GM18951 (cell line): ENCODE measurements at regions of chr18 and their contacts with region 1.

Region 1: GRCh38 chr18:3665780-3666525 is 216.0 kb downstream of the TGIF1 start:
- POLR2A ChIP-seq: no peak

Region 2: DNA sequence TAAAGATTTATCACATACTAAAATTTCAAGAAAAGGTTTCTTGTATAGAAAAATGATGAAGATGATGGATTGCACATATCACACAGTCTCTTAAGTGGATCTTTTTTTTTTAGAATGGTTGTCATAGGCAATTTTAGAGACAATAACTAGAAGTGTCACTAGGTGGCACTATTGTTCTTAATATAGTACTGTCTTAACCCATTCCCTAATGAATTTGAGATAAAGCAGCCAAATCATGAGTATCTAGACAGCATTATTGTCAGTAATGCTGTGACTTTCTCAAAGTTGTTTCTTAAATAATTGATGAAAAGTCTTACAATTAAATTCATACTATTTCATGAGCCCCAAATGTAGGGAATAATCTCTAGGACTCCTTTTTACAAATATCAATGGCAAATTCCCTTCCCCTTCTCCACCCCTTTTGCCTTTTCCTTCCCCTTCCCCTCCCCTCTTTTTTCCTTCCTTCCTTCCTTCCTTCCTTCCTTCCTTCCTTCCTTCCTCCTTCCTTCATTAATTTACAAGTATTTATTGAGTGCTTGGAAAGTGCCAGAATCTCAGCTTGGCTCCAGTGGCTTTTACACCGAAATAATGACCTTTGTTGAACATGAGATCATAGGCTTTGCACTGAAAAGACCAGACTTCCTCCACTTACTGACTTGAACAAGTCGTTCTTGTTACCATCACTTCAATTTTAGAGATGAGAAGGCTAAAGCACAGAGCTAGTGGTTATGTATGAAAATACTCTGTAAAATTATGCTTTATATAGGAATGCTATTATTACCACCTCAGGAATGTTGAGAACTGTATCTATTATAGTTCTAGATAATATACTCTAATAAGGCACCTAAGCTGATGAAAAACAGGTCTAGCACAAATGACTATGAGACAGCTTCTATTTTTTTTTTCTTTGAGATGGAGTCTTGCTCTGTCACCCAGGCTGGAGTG is 384.2 kb before region 1 on chr18:
- in situ Hi-C with region 1: loop called (anchors 5 kb)
- POLR2A ChIP-seq: no peak